CD4-positive, alpha-beta memory T cell (primary cell): ENCODE measurements at regions of chr7 and their contacts with region 1.

Region 1: DNA sequence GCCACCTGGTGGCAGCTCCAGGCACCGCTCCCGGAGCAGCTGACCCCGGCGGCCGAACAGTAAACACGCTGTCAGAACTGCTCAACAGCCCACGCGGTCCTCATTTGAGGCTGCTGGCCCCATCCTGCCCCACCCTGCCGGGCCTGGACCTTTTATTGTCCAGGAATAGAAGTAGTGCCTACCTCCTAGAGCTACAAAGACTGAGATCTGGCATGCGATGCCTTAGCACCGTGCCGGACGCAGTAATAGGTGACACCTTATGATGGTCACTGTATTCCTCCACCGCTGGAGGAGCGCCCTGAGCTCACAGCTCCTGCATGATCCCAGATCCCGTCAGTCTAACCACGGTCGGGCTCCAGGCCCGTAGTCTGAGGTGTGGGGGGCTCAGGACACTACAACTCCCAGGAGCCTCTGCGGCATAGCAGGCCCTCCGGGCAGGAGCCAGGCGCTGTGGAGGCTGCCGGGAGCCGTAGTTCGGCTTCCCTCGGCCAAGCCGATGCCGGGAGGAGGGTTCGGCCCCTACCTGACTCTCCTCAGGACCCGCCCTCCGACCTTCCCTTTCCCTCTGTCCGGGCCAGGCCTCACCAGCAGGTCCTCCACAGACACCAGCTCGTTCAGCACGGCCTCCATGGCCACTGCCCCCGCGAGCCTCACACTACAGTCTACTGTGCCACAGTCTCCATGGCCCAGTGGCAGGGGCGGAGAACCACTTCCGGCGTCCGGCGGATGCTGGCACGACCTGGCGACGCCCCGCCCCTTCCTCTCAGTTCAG is at the start of gene FIS1:
- DNase-seq: peak; percentile 91 to 96 (median 93)
- H3K4me3 ChIP-seq: peak within 1 kb of the TSS; percentile 95 to 100
- H3K4me3 Mint-ChIP-seq: peak within 1 kb of the TSS; percentile 93 to 99 (median 97)
- H3K27ac ChIP-seq: peak within 1 kb of the TSS; percentile 85
- H3K27ac Mint-ChIP-seq: peak within 1 kb of the TSS; percentile 93 to 99 (median 97)
- H3K4me1 ChIP-seq: peaks cover 24% of the 10 kb centered on the region
- H3K4me1 Mint-ChIP-seq: peaks cover 14 to 50% (median 24%) of the 10 kb centered on the region in 4 donors
- H3K27me3 ChIP-seq: no peaks in the 10 kb centered on the region
- H3K27me3 Mint-ChIP-seq: no peaks in the 10 kb centered on the region
- total RNA-seq, gene FIS1: 100 to 104 TPM

Region 2: DNA sequence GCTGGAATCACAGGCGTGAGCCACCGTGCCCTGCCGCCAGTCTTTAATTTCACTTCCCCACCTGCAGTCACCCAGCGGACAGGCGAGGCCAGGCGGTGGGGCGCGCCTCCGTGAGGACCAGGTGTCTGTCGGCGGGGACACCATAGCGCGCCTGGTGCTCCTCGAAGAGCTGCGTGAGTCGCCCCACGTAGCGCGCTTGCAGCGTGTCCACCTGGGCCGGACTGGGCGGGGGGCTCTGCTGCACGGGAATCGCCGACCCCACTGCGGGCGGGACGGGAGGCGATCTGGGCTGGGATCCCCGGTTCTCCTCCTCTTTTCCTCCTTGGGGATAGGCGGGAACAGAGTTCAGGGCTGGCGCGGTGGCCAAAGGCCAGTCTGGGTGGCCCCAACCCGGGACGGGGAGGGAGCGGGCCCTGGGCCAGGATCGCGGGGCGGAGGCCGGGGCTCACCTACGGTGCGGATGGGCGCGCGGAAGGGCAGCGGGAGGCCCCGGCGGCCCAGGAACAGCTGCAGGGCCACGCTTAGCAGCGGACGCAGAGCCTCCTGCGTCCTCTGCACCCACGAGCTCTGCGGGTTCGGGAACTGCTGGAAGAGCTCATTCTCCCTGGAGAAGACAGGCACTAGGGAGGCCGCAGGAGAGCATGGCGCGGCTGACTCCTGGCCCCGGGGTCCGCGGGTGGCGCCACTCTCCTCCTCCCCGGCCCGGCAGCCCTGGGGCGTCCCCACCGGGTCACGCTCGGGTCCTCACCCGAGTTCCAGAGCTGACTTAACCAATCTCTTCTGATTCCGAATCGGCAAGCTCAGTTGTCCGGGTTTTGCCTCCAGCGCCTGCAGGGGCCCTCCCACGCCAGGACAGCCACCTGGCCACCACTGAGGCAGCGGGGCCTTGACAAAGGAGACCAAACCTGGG is 42.6 kb before region 1 on chr7:
- CTCF ChIA-PET with region 1: interaction called, 7 read pairs
- POLR2A ChIA-PET with region 1: interaction called, 16 read pairs
- intact Hi-C with region 1: no loop called
- DNase-seq: no peak
- H3K4me3 ChIP-seq: no peak overlapping the region
- H3K4me3 Mint-ChIP-seq: peak overlapping the region in 5 of 8 donors; percentile 15 to 52 (median 44)
- H3K27ac ChIP-seq: no peak overlapping the region
- H3K27ac Mint-ChIP-seq: no peak overlapping the region
- H3K4me1 ChIP-seq: peaks cover 13% of the 10 kb centered on the region
- H3K4me1 Mint-ChIP-seq: peaks cover 7 to 25% (median 13%) of the 10 kb centered on the region in 4 donors
- H3K27me3 ChIP-seq: no peaks in the 10 kb centered on the region
- H3K27me3 Mint-ChIP-seq: peaks cover 11 to 15% of the 10 kb centered on the region in 2 donors

Region 3: DNA sequence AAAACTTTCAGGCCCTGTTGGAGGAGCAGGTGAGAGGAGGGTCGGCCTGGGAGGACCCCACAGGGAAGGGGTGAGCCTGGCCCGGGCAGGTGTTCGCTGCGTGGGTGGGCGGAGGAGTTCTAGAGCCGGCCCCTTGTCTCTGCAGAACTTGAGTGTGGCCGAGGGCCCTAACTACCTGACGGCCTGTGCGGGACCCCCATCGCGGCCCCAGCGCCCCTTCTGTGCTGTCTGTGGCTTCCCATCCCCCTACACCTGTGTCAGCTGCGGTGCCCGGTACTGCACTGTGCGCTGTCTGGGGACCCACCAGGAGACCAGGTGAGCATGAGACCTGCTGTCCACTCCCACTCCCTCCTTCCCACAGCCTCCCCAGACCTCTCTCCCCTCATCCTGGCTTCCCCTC is 21.0 kb before region 1 on chr7:
- CTCF ChIA-PET with region 1: interaction called, 105 read pairs
- POLR2A ChIA-PET with region 1: interaction called, 102 read pairs
- intact Hi-C with region 1: loop called (anchors 1 kb)
- DNase-seq: no peak
- H3K4me3 ChIP-seq: no peak overlapping the region
- H3K4me3 Mint-ChIP-seq: no peak overlapping the region
- H3K27ac ChIP-seq: no peak overlapping the region
- H3K27ac Mint-ChIP-seq: no peak overlapping the region
- H3K4me1 ChIP-seq: peaks cover 19% of the 10 kb centered on the region
- H3K4me1 Mint-ChIP-seq: peaks cover 9 to 29% (median 17%) of the 10 kb centered on the region in 4 donors
- H3K27me3 ChIP-seq: no peaks in the 10 kb centered on the region
- H3K27me3 Mint-ChIP-seq: no peaks in the 10 kb centered on the region

Region 4: DNA sequence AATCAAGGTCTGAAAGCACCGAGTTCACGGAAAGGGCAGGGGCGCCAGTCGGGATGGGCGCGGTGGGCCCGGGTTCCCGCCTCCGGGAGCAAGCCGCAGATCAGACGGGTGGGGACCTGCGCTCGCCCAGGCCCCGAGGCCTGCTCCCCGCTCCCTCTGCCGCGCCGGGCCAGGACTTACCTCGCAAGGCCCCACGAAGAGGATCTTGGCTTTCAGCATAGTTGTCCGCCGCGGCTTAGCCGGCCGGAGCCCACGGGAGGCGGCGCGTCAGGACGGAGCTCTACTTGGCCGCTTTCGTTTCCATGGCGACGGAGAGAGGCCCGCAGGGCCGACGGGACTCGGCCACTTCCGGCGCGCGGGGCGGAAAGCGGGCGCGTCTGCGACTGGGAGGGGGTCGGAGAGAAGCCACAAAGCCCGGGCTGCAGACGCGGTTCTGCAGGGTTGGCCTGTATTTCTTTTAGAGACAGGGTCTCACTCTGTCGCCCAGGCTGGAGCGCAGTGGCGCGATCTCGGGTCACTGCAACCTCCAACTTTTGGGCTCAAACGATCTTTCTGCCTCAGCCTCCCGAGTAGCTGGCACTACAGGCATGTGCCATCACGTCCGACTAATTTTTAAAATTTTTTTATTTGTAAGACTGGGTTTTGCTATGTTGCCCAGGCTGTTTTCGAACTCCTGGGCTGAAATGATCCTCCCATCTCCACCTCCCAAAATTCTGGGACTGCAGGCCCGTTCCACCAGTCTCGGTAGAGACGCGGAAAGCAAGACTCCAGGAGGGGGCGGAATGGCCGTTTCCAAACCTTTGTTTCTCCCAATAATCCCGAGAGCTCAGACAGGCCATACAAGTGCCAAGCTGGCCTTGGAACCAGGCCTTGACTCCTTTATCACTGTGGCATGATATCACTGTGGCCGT is 77.2 kb after region 1 on chr7 and contains the start of gene IFT22:
- CTCF ChIA-PET with region 1: no interaction called
- POLR2A ChIA-PET with region 1: interaction called, 3 read pairs
- intact Hi-C with region 1: loop called (anchors 2 kb)
- DNase-seq: peak; percentile 77 to 82 (median 77)
- H3K4me3 ChIP-seq: peak within 1 kb of the TSS; percentile 47 to 87
- H3K4me3 Mint-ChIP-seq: peak within 1 kb of the TSS; percentile 89 to 95 (median 92)
- H3K27ac ChIP-seq: peak within 1 kb of the TSS; percentile 54
- H3K27ac Mint-ChIP-seq: peak within 1 kb of the TSS; percentile 83 to 95 (median 92)
- H3K4me1 ChIP-seq: peaks cover 16% of the 10 kb centered on the region
- H3K4me1 Mint-ChIP-seq: peaks cover 5 to 20% (median 10%) of the 10 kb centered on the region in 4 donors
- H3K27me3 ChIP-seq: no peaks in the 10 kb centered on the region
- H3K27me3 Mint-ChIP-seq: no peaks in the 10 kb centered on the region
- total RNA-seq, gene IFT22: 2.6 TPM

Region 5: DNA sequence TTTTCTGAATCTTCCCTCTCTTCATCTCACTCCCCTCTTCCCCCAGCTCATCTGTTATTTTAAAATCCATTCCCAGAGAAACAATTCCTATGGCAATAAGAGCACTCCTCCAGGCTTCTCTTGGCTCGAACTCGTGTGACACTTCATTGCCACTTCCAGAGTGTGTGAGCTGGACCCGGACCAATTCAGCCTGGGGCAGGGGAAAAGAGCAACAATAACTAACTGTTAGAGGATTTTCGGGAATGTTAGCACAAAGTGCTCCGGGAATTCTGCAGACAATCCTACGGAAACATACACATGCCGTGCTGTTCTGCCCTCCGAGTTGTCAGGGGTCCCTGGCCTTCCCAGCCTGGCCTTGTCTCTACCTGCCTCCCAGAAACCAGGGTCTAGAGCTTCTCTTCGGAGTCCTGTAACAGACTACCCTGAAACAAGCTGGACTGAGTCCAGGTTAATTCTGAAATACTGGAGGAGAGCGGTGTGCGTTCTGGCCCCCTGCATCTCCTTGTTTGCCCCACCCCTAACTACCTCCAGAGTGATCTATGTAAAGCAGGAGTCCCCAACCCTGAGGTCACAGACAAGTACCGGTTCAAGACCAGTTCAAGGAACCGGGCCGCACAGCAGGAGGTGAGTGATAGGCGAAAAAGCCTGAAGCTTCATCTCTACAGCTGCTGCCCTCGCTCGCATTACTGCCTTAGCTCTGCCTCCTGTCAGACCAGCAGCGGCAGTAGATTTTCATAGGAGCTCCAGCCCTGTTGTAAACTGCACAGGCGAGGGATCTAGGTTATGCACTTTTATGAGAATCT is 129.5 kb after region 1 on chr7:
- CTCF ChIA-PET with region 1: no interaction called
- POLR2A ChIA-PET with region 1: no interaction called
- intact Hi-C with region 1: no loop called
- DNase-seq: no peak
- H3K4me3 ChIP-seq: no peak overlapping the region
- H3K4me3 Mint-ChIP-seq: no peak overlapping the region
- H3K27ac ChIP-seq: no peak overlapping the region
- H3K27ac Mint-ChIP-seq: no peak overlapping the region
- H3K4me1 ChIP-seq: no peaks in the 10 kb centered on the region
- H3K4me1 Mint-ChIP-seq: no peaks in the 10 kb centered on the region
- H3K27me3 ChIP-seq: no peaks in the 10 kb centered on the region
- H3K27me3 Mint-ChIP-seq: peaks cover 7 to 14% of the 10 kb centered on the region in 2 donors